Adrenal gland (tissue), 19 donors: ENCODE measurements at regions of chr4 and their contacts with region 1.

Region 1: DNA sequence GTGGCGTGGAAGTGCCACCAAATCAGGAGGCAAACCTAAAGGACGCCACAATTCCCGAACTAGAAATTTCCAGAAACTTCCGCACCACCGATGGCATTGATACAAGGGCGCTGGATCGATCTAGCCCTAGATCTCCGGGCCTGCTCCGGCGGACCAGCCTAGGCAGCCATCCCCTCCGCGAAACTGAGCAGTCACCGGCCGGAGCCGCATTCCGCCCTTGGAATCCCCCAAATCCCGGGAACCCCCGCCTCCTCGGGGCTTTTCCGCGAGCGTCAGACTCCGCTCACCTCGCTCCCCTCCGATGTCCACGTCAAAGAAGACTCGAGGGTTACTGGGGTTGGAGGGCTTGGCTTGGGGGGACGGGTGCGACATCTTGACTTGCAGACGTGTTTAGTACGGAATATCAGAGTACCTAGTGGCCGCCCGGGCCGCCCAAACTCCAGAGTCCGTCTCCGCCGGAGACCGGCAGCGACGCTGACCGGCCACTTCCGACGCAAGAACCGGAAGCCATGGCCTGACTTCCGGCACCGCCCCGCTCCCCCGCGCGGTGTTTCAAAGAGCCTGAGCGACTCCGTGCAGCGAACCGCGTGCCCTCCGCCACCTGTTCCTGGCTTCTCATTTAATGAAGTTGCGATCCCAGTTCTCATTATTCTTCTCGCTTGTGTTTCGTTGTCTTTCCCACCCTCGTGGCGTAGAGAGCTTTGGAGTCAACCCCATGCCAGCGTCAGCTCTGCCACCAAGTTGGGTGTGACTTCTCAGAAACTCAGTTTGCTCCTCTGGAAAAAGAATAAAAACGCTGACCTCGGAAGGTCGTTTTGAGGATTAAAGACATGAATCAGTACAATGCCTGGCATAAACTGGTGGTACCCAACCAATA is at the start of gene PPID:
- DNase-seq: peak; percentile 83 to 90 (median 84)
- H3K4me3 ChIP-seq: peak within 1 kb of the TSS; percentile 25 to 82 (median 65)
- H3K27ac ChIP-seq: peak within 1 kb of the TSS; percentile 73 to 96 (median 83)
- H3K4me1 ChIP-seq: peaks cover 6 to 13% of the 10 kb centered on the region in 2 donors
- H3K27me3 ChIP-seq: no peaks in the 10 kb centered on the region
- CTCF ChIP-seq: peak in 1 of 6 experiments; percentile 8
- POLR2A ChIP-seq: peak; percentile 57 to 64
- total RNA-seq, gene PPID: 12.3 to 34.7 (median 21.1) TPM

Region 2: DNA sequence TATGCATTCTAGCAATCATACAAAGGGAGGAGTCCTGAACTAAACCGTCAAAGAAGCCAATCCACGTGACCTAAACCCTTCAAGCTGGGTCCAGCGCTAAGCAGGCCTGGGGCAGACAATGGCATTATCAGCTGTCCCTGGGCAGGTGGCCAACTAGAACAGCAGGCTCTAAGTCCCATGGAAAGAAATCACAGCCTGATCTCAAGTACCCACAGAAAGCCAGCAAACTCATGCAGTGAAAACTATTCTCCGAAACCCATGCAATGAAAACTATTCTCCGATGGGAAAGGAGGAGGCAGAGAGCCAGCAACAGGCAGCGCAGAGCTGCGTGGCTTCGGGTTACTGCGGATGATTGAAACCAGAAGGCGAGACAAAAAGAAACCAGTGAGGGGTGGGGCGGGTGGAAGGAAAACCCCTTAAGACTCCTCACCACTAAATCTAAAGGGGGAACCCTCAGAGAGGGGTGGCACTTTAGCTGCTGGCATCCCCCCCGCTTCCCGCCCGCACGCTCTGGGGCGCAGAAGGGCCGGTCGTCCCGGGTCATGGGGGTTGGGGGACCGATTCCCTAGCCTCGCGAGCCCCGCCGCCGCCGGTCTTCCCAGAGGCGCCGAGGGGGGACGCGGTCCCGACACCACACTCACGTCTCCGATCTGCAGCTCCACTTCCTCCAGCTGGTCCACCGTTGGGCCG is 52.0 kb before region 1 on chr4:
- intact Hi-C with region 1: no loop called
- DNase-seq: peak; percentile 70 to 92 (median 87)
- H3K4me3 ChIP-seq: peak overlapping the region; percentile 72 to 95 (median 84)
- H3K27ac ChIP-seq: peak overlapping the region; percentile 54 to 98 (median 86)
- H3K4me1 ChIP-seq: peaks cover 14 to 18% of the 10 kb centered on the region in 2 donors
- H3K27me3 ChIP-seq: no peaks in the 10 kb centered on the region
- CTCF ChIP-seq: no peak
- POLR2A ChIP-seq: peak in 1 of 2 donors; percentile 23

Region 3: GRCh38 chr4:159185591-159186023 is 462.5 kb after region 1 on chr4:
- intact Hi-C with region 1: loop called in 1 of 2 experiments (anchors 5 kb)
- DNase-seq: no peak
- H3K4me3 ChIP-seq: no peak overlapping the region
- H3K27ac ChIP-seq: no peak overlapping the region
- H3K4me1 ChIP-seq: peaks cover 0 to 8% of the 10 kb centered on the region in 2 donors
- H3K27me3 ChIP-seq: no peaks in the 10 kb centered on the region
- CTCF ChIP-seq: no peak
- POLR2A ChIP-seq: no peak

Region 4: GRCh38 chr4:159206427-159206871 is 483.3 kb after region 1 on chr4:
- intact Hi-C with region 1: loop called in 1 of 2 experiments (anchors 10 kb)
- DNase-seq: no peak
- H3K4me3 ChIP-seq: no peak overlapping the region
- H3K27ac ChIP-seq: no peak overlapping the region
- H3K4me1 ChIP-seq: no peaks in the 10 kb centered on the region
- H3K27me3 ChIP-seq: no peaks in the 10 kb centered on the region
- CTCF ChIP-seq: no peak
- POLR2A ChIP-seq: no peak